MCF 10A (cell line): ENCODE measurements at regions of chr2 and their contacts with region 1.

Region 1: GRCh38 chr2:165953655-165954606 is at the start of gene TTC21B:
- DNase-seq: peak; percentile 91
- H3K4me3 Mint-ChIP-seq: no peak within 1 kb of the TSS
- H3K27ac Mint-ChIP-seq: no peak within 1 kb of the TSS
- H3K4me1 Mint-ChIP-seq: peaks cover 11% of the 10 kb centered on the region
- H3K27me3 Mint-ChIP-seq: no peaks in the 10 kb centered on the region
- CTCF ChIP-seq: peak; percentile 76
- total RNA-seq, gene TTC21B: 9.8 and 10.9 TPM in 2 replicates

Region 2: DNA sequence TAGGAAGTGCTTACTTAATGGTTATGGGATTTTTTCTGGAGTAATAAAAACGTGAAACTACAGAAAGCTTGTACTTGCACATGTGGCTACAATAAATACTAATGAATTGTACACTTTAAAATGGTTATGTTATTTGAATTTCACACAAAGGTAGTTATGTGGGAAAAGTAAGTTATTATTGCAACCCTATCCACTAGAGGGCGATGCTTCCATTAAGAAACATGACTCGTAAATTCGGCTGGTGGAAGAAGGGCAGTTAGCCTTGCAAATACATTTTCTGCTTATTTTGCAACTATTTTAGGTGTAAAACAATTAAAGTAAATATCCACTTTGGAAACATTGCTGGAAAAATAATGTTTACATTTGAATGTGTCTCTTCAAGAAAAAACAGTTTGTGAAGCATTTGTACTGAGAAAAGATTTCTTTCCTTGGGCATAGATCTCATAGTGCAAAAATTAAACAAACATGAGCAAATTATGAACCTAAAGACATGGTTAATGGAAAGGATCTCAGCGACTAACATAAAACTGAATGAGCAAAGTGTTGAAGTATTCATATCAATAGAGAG is 552.6 kb before region 1 on chr2:
- CTCF ChIA-PET with region 1: no interaction called
- POLR2A ChIA-PET with region 1: no interaction called
- intact Hi-C with region 1: loop called (anchors 5 kb)
- DNase-seq: peak; percentile 68
- H3K4me3 Mint-ChIP-seq: no peak overlapping the region
- H3K27ac Mint-ChIP-seq: no peak overlapping the region
- H3K4me1 Mint-ChIP-seq: no peaks in the 10 kb centered on the region
- H3K27me3 Mint-ChIP-seq: peaks cover 78% of the 10 kb centered on the region
- CTCF ChIP-seq: peak; percentile 61

Region 3: GRCh38 chr2:165794536-165794928 is 159.4 kb before region 1 on chr2:
- CTCF ChIA-PET with region 1: interaction called, 4 read pairs
- POLR2A ChIA-PET with region 1: interaction called, 11 read pairs
- intact Hi-C with region 1: no loop called
- DNase-seq: peak; percentile 81
- H3K4me3 Mint-ChIP-seq: peak overlapping the region; percentile 87
- H3K27ac Mint-ChIP-seq: peak overlapping the region; percentile 39
- H3K4me1 Mint-ChIP-seq: peaks cover 10% of the 10 kb centered on the region
- H3K27me3 Mint-ChIP-seq: no peaks in the 10 kb centered on the region
- CTCF ChIP-seq: no peak

Region 4: GRCh38 chr2:165924946-165925345 is 29.0 kb before region 1 on chr2:
- CTCF ChIA-PET with region 1: no interaction called
- POLR2A ChIA-PET with region 1: no interaction called
- intact Hi-C with region 1: no loop called
- DNase-seq: no peak
- H3K4me3 Mint-ChIP-seq: no peak overlapping the region
- H3K27ac Mint-ChIP-seq: no peak overlapping the region
- H3K4me1 Mint-ChIP-seq: no peaks in the 10 kb centered on the region
- H3K27me3 Mint-ChIP-seq: no peaks in the 10 kb centered on the region
- CTCF ChIP-seq: no peak

Region 5: GRCh38 chr2:166112193-166112605 is 158.3 kb after region 1 on chr2:
- CTCF ChIA-PET with region 1: interaction called, 4 read pairs
- POLR2A ChIA-PET with region 1: no interaction called
- intact Hi-C with region 1: loop called (anchors 5 kb)
- DNase-seq: peak; percentile 33
- H3K4me3 Mint-ChIP-seq: no peak overlapping the region
- H3K27ac Mint-ChIP-seq: no peak overlapping the region
- H3K4me1 Mint-ChIP-seq: no peaks in the 10 kb centered on the region
- H3K27me3 Mint-ChIP-seq: no peaks in the 10 kb centered on the region
- CTCF ChIP-seq: no peak

Region 6: DNA sequence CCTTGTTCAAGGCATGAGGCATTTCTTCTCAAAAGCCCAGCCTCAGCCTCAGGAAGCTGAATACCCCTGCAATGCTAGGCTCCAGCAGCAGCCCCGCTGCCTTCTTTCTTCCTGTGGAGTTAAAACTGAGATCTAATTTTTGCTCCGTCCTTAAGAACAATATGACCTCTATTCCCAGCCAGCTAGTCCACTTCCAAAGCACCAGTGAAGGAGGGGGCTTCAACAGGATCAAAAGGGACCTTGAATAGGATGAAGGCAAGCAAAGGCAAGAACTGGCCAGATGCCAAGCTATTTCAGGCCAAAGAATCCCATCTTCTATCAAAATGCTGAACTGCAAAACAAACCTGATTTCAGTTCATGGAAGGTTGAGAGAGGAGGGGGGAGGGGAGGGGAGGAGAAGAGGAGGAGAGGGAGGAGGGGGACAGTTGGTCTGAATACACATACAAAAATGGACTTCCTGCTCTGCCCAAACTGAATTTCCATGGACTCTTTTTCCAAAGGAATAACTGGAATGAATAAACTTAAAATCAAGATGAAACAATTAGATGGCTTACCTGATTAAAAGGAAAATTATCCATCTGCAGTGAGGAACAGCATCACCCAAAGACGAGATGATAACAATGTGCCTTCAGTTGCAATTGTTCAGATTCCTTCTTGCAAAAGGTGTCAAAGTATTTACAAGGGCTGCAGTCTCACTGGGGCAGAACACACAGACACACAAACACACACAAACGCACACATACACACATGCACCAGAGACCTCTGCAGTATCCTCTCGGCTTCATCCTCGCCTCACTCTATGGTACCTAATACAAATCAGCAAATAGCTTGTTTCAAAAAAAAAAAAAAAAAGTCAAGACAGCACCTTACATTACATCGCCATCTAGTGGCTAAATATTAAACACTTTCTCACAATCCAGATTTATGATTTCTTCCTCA is 173.6 kb after region 1 on chr2 and contains the start of gene SCN1A:
- CTCF ChIA-PET with region 1: interaction called, 108 read pairs
- POLR2A ChIA-PET with region 1: interaction called, 13 read pairs
- intact Hi-C with region 1: loop called (anchors 1 kb)
- DNase-seq: peak; percentile 48
- H3K4me3 Mint-ChIP-seq: no peak within 1 kb of the TSS
- H3K27ac Mint-ChIP-seq: no peak within 1 kb of the TSS
- H3K4me1 Mint-ChIP-seq: peaks cover 14% of the 10 kb centered on the region
- H3K27me3 Mint-ChIP-seq: peaks cover 64% of the 10 kb centered on the region
- CTCF ChIP-seq: peak; percentile 57
- total RNA-seq, gene SCN1A: not detected in 2 replicates

Region 7: GRCh38 chr2:166417669-166418068 is 463.7 kb after region 1 on chr2:
- CTCF ChIA-PET with region 1: interaction called, 4 read pairs
- POLR2A ChIA-PET with region 1: no interaction called
- intact Hi-C with region 1: loop called (anchors 5 kb)
- DNase-seq: peak; percentile 58
- H3K4me3 Mint-ChIP-seq: no peak overlapping the region
- H3K27ac Mint-ChIP-seq: no peak overlapping the region
- H3K4me1 Mint-ChIP-seq: no peaks in the 10 kb centered on the region
- H3K27me3 Mint-ChIP-seq: peaks cover 6% of the 10 kb centered on the region
- CTCF ChIP-seq: no peak

Region 8: DNA sequence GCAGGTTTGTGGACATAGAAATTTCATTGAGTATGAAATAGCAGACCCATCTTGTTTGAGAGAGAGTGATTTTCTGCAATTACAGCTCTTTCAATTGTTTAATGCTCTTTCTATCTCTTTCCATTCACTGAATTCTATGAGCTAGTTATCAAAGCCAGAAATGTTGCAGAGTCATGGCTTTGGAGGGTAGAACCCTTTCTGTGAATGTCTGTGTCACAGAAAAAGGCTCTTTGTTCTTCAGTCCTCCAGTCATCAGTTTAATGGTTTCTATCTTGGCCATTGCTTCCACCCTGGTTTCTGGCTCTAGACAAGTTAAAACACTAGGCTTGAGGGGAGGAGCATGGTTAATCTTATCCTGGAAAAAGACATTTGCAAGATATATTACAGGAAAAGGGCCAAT is 1638.5 kb after region 1 on chr2:
- CTCF ChIA-PET with region 1: no interaction called
- POLR2A ChIA-PET with region 1: no interaction called
- intact Hi-C with region 1: no loop called
- DNase-seq: no peak
- H3K4me3 Mint-ChIP-seq: no peak overlapping the region
- H3K27ac Mint-ChIP-seq: no peak overlapping the region
- H3K4me1 Mint-ChIP-seq: no peaks in the 10 kb centered on the region
- H3K27me3 Mint-ChIP-seq: no peaks in the 10 kb centered on the region
- CTCF ChIP-seq: no peak